ENCODE measurements at regions of chr5 and their contacts with region 1.

Region 1: GRCh38 chr5:126339215-126339805 is 83.9 kb upstream of the GRAMD2B start:
- DNase-seq: no peak
- H3K4me3 ChIP-seq: no peak overlapping the region
- H3K27ac ChIP-seq: no peak overlapping the region
- H3K4me1 ChIP-seq: peaks cover 0 to 3% (median 0%) of the 10 kb centered on the region in 4 experiments; a peak in 1 of 7 replicates
- H3K27me3 ChIP-seq: no peaks in the 10 kb centered on the region
- CTCF ChIP-seq: peak in 2 of 3 experiments; percentile 61 to 71; a peak in 3 of 4 replicates
- EP300 ChIP-seq: no peak
- POLR2A ChIP-seq: no peak
- RAD21 ChIP-seq: peak; percentile 90 to 92

Region 2: GRCh38 chr5:126234563-126235195 is 104.6 kb before region 1 on chr5:
- CTCF ChIA-PET with region 1: interaction called, 12 read pairs
- POLR2A ChIA-PET with region 1: no interaction called
- DNase-seq: peak in 1 of 2 experiments; percentile 54
- H3K4me3 ChIP-seq: no peak overlapping the region
- H3K27ac ChIP-seq: no peak overlapping the region
- H3K4me1 ChIP-seq: no peaks in the 10 kb centered on the region; a peak in 1 of 7 replicates
- H3K27me3 ChIP-seq: peaks cover 0 to 1% (median 0%) of the 10 kb centered on the region in 4 experiments; a peak in 1 of 7 replicates
- CTCF ChIP-seq: peak; percentile 55 to 94 (median 69)
- EP300 ChIP-seq: no peak
- POLR2A ChIP-seq: no peak
- RAD21 ChIP-seq: peak; percentile 84 to 88

Region 3: DNA sequence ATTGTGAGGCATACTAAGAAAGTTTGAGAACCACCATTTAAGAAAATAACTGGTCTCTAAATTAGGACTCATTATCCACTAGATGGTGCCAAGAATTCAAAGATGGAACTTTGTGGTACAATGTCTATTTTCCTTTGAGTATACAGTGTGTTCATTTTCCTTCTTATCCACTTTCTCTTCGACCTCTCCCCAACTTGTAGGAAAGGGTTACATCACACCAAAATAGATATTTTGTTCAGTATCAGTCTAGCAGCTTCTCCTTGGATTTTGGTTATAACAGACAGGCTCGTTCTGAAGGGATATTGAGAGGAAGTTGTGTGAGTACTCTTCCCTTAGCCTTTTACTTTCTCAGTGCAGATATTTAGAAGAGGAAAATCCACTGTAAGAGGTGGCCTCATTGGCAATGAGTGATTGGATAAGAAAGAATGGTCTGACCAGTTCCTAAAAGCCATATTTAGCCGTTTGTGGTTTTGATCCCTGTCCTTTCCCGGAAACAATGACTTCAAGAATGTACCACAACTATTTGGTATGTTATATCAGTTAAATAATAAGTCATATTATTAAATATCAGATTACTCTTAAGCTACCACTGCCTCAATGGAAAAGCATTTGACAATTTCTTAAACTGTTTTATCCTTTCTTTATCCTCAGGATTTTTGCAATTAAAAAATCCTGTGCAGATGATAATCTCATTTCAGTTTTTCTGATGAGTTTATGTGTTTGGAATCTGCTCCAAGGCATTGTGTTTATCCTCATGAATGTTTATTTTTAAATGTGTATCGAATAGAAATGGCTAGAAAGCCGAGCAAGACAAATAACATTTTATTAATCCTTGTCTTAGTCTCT is 14.9 kb after region 1 on chr5:
- CTCF ChIA-PET with region 1: interaction called, 71 read pairs
- POLR2A ChIA-PET with region 1: no interaction called
- DNase-seq: no peak
- H3K4me3 ChIP-seq: no peak overlapping the region
- H3K27ac ChIP-seq: no peak overlapping the region
- H3K4me1 ChIP-seq: peaks cover 0 to 5% (median 3%) of the 10 kb centered on the region in 4 experiments; a peak in 4 of 7 replicates
- H3K27me3 ChIP-seq: no peaks in the 10 kb centered on the region
- CTCF ChIP-seq: peak in 2 of 3 experiments; percentile 33 to 45; a peak in 2 of 4 replicates
- EP300 ChIP-seq: no peak
- POLR2A ChIP-seq: no peak
- RAD21 ChIP-seq: peak; percentile 77 to 78

Region 4: GRCh38 chr5:126490167-126490940 is 151.0 kb after region 1 on chr5:
- CTCF ChIA-PET with region 1: interaction called, 22 read pairs
- POLR2A ChIA-PET with region 1: no interaction called
- DNase-seq: no peak
- H3K4me3 ChIP-seq: no peak overlapping the region
- H3K27ac ChIP-seq: no peak overlapping the region
- H3K4me1 ChIP-seq: no peaks in the 10 kb centered on the region
- H3K27me3 ChIP-seq: no peaks in the 10 kb centered on the region
- CTCF ChIP-seq: peak in 2 of 3 experiments; percentile 20 to 23; a peak in 2 of 4 replicates
- EP300 ChIP-seq: no peak
- POLR2A ChIP-seq: no peak
- RAD21 ChIP-seq: peak in 1 of 2 experiments; percentile 27; a peak in 2 of 4 replicates

Region 5: GRCh38 chr5:126531543-126532120 is 192.3 kb after region 1 on chr5:
- CTCF ChIA-PET with region 1: interaction called, 76 read pairs
- POLR2A ChIA-PET with region 1: no interaction called
- DNase-seq: peak in 1 of 2 experiments; percentile 29
- H3K4me3 ChIP-seq: no peak overlapping the region
- H3K27ac ChIP-seq: no peak overlapping the region
- H3K4me1 ChIP-seq: no peaks in the 10 kb centered on the region
- H3K27me3 ChIP-seq: no peaks in the 10 kb centered on the region
- CTCF ChIP-seq: no peak
- EP300 ChIP-seq: no peak
- POLR2A ChIP-seq: no peak
- RAD21 ChIP-seq: no peak

Region 6: GRCh38 chr5:126544087-126544740 is 204.9 kb after region 1 on chr5:
- CTCF ChIA-PET with region 1: interaction called, 67 read pairs
- POLR2A ChIA-PET with region 1: interaction called, 3 read pairs
- DNase-seq: peak in 1 of 2 experiments; percentile 52
- H3K4me3 ChIP-seq: no peak overlapping the region
- H3K27ac ChIP-seq: no peak overlapping the region
- H3K4me1 ChIP-seq: no peaks in the 10 kb centered on the region
- H3K27me3 ChIP-seq: no peaks in the 10 kb centered on the region
- CTCF ChIP-seq: peak; percentile 45 to 64 (median 57)
- EP300 ChIP-seq: no peak
- POLR2A ChIP-seq: no peak
- RAD21 ChIP-seq: peak; percentile 45 to 52